ENCODE measurements at regions of chr2 and their contacts with region 1.

Region 1: GRCh38 chr2:170715062-170715931 is at the start of gene SP5:
- DNase-seq: peak; percentile 65
- H3K4me3 ChIP-seq: peak within 1 kb of the TSS; percentile 50
- H3K27ac ChIP-seq: no peak within 1 kb of the TSS
- H3K4me1 ChIP-seq: peaks cover 12% of the 10 kb centered on the region
- H3K27me3 ChIP-seq: peaks cover 59% of the 10 kb centered on the region
- CTCF ChIP-seq: no peak
- total RNA-seq, gene SP5: 1.2 to 3.5 TPM

Region 2: DNA sequence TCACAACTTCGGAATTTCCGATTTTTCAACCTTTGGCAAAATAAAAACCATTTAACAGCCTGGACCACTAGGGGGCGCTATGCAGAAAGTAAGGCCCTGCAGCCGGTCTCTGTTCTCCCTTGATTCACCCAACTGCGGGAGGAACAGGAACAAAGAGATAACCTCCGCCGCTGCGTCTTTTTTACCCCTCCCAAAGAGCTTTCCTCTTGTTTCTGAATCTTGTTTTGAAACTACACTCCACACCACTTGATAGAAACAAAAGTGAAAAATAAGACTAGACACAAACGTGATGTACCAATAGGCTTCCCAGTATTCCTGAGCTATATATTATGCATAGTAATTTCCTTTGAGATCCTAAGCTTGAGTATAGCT is 306.1 kb before region 1 on chr2:
- intact Hi-C with region 1: loop called (anchors 5 kb)
- DNase-seq: peak; percentile 85
- H3K4me3 ChIP-seq: no peak overlapping the region
- H3K27ac ChIP-seq: no peak overlapping the region
- H3K4me1 ChIP-seq: no peaks in the 10 kb centered on the region
- H3K27me3 ChIP-seq: no peaks in the 10 kb centered on the region
- CTCF ChIP-seq: peak; percentile 84

Region 3: DNA sequence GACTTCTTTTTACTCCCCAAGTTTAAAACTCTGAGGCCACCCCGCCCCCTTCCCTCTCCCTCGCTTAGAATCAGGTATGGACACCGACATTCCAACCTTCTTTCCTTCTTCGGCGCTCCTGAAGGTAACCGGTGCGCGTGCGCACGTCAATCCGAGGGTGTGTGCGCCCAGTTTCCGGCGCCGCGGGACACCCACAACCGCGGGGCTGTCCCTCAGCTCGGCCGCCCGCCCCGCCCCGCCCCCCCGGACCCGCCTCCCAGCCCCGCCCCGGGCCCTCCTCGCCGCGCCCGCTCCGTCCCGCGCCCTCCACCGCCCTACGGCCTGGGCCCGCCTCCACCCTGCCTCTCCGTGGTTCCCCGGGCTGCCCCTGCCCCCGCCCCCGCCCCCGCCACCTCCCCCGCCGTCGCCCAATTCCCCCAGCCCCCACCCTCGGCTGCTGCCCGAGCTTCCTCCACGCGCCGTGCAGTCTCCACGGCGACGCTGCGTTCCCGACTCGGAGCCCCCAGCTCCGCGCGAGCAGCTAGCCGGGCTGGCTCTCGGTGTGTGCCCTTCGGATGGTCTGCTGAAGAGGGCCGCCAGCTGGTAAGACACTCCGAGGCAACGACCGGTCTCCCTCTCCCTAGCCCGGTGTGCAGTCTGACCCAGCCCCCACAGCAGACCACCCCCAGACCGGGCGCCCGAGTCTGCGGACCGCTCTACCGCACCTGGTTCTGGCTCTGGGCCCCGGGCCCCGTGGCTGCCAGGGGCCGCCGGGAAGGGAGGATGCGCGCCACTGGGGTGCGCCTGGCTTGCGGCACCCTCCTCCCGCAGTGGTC is 55.5 kb after region 1 on chr2:
- intact Hi-C with region 1: loop called (anchors 5 kb)
- DNase-seq: peak; percentile 82
- H3K4me3 ChIP-seq: peak overlapping the region; percentile 60
- H3K27ac ChIP-seq: peak overlapping the region; percentile 48
- H3K4me1 ChIP-seq: no peaks in the 10 kb centered on the region
- H3K27me3 ChIP-seq: no peaks in the 10 kb centered on the region
- CTCF ChIP-seq: no peak

Region 4: DNA sequence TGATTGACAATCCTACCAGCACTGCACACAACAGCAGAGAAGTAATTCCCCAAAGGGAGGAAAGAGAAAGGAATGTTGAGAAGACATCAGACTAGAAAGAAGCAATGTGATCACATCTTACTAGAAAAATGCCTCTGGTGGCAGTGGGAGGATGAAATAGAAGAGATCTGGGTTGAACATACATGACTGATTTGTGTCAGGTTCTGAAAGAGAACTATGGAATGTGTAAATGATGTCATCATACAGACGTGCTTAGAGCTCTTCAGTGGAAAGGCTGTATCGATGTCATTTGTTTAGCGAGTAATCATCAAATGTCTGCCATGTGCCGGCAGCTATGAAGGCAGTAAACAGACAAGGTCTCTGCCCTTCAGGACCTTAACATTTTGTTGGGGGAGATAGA is 238.6 kb after region 1 on chr2:
- intact Hi-C with region 1: no loop called
- DNase-seq: no peak
- H3K4me3 ChIP-seq: no peak overlapping the region
- H3K27ac ChIP-seq: no peak overlapping the region
- H3K4me1 ChIP-seq: no peaks in the 10 kb centered on the region
- H3K27me3 ChIP-seq: no peaks in the 10 kb centered on the region
- CTCF ChIP-seq: no peak

Measured in colonic mucosa (tissue), 4 donors.